Activated naive CD4-positive, alpha-beta T cell treated with anti-CD3 and anti-CD28 coated beads for 36 hours (primary cell): ENCODE measurements at regions of chr3 and their contacts with region 1.

Region 1: DNA sequence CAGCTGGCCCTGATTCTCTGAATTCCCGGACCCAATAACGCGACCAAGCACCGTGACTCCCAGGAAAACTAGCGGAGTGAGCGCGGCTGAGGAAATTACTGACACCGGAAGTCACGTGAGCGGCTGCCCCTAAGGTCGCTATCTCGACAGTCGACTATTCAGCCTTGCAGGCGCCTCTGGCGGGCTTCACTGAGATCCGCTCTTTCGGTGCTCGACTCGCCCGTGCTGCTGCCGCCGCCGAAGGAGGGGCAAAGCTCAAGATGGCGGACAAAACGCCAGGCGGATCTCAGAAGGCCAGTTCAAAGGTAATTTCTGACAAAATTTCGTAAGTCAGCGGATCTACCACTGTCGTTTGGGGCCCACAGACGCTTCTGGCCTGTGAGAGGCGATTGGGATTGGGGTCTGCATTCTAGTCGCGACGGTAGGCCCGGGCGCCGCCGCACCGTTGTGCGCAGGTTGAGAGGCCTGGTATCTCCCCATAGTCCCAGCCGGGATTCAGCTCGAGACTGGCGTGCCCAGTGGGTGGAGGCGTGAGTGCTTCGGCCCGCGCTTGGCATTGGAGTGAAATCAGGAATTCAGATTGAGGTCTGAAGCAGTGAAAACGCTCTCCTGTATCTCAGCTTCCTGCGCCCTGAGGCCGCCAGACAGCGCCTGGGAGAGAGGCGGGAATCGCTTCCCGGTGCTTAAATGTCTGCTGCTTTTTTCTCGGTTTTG is at the start of gene U2SURP:
- DNase-seq: peak; percentile 95
- H3K4me3 Mint-ChIP-seq: peak within 1 kb of the TSS; percentile 96
- H3K27ac Mint-ChIP-seq: peak within 1 kb of the TSS; percentile 96
- H3K4me1 Mint-ChIP-seq: peaks cover 31% of the 10 kb centered on the region
- H3K27me3 Mint-ChIP-seq: no peaks in the 10 kb centered on the region
- total RNA-seq, gene U2SURP: 173 to 180 TPM

Region 2: DNA sequence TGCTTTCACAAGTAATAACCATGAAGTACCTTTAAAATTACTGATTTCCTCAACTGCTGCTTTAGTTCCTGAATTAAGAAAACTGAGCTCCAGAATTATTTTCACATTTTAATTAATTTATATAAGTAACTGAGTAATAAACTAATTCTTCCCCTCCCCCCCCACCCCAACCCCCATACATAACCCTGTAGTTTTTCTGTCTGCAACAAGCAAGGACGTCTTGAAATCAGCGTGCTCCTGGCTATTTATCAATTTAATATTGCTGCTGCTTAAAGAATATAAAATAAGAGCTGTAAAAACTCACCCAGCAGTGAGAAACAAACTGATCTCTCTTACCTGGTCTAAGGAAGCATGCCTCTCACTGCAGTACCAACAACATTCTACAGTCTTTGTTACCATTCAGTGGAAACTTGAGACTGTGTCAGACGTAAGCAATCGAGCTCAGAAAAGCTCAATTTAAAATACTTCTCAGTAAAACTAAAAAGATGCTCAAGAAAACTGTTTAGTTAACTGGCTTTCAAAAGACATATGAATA is 973.2 kb before region 1 on chr3:
- CTCF ChIA-PET with region 1: no interaction called
- intact Hi-C with region 1: loop called (anchors 1 kb)
- DNase-seq: peak; percentile 62
- H3K4me3 Mint-ChIP-seq: peak overlapping the region; percentile 80
- H3K27ac Mint-ChIP-seq: peak overlapping the region; percentile 73
- H3K4me1 Mint-ChIP-seq: peaks cover 24% of the 10 kb centered on the region
- H3K27me3 Mint-ChIP-seq: no peaks in the 10 kb centered on the region

Region 3: GRCh38 chr3:142498397-142499180 is 502.9 kb before region 1 on chr3:
- CTCF ChIA-PET with region 1: no interaction called
- intact Hi-C with region 1: loop called (anchors 5 kb)
- DNase-seq: no peak
- H3K4me3 Mint-ChIP-seq: peak overlapping the region; percentile 15
- H3K27ac Mint-ChIP-seq: peak overlapping the region; percentile 80
- H3K4me1 Mint-ChIP-seq: peaks cover 35% of the 10 kb centered on the region
- H3K27me3 Mint-ChIP-seq: no peaks in the 10 kb centered on the region

Region 4: GRCh38 chr3:142595951-142596725 is 405.4 kb before region 1 on chr3 and contains the start of gene PLS1:
- CTCF ChIA-PET with region 1: no interaction called
- intact Hi-C with region 1: loop called (anchors 1 kb)
- DNase-seq: peak; percentile 83
- H3K4me3 Mint-ChIP-seq: peak within 1 kb of the TSS; percentile 94
- H3K27ac Mint-ChIP-seq: peak within 1 kb of the TSS; percentile 66
- H3K4me1 Mint-ChIP-seq: peaks cover 14% of the 10 kb centered on the region
- H3K27me3 Mint-ChIP-seq: no peaks in the 10 kb centered on the region
- total RNA-seq, gene PLS1: 5.3 to 5.4 TPM

Region 5: GRCh38 chr3:142817897-142818296 is 183.6 kb before region 1 on chr3:
- CTCF ChIA-PET with region 1: no interaction called
- intact Hi-C with region 1: no loop called
- DNase-seq: no peak
- H3K4me3 Mint-ChIP-seq: no peak overlapping the region
- H3K27ac Mint-ChIP-seq: no peak overlapping the region
- H3K4me1 Mint-ChIP-seq: no peaks in the 10 kb centered on the region
- H3K27me3 Mint-ChIP-seq: no peaks in the 10 kb centered on the region

Region 6: GRCh38 chr3:143016321-143016972 is 14.9 kb after region 1 on chr3:
- CTCF ChIA-PET with region 1: interaction called, 6 read pairs
- intact Hi-C with region 1: loop called (anchors 1 kb)
- DNase-seq: no peak
- H3K4me3 Mint-ChIP-seq: no peak overlapping the region
- H3K27ac Mint-ChIP-seq: no peak overlapping the region
- H3K4me1 Mint-ChIP-seq: peaks cover 20% of the 10 kb centered on the region
- H3K27me3 Mint-ChIP-seq: no peaks in the 10 kb centered on the region

Region 7: GRCh38 chr3:143081844-143082778 is 80.6 kb after region 1 on chr3:
- CTCF ChIA-PET with region 1: no interaction called
- intact Hi-C with region 1: loop called (anchors 1 kb)
- DNase-seq: peak; percentile 51
- H3K4me3 Mint-ChIP-seq: peak overlapping the region; percentile 41
- H3K27ac Mint-ChIP-seq: peak overlapping the region; percentile 86
- H3K4me1 Mint-ChIP-seq: peaks cover 23% of the 10 kb centered on the region
- H3K27me3 Mint-ChIP-seq: no peaks in the 10 kb centered on the region

Region 8: GRCh38 chr3:143535994-143536784 is 534.7 kb after region 1 on chr3:
- CTCF ChIA-PET with region 1: no interaction called
- intact Hi-C with region 1: no loop called
- DNase-seq: no peak
- H3K4me3 Mint-ChIP-seq: no peak overlapping the region
- H3K27ac Mint-ChIP-seq: no peak overlapping the region
- H3K4me1 Mint-ChIP-seq: peaks cover 21% of the 10 kb centered on the region
- H3K27me3 Mint-ChIP-seq: no peaks in the 10 kb centered on the region

Region 9: DNA sequence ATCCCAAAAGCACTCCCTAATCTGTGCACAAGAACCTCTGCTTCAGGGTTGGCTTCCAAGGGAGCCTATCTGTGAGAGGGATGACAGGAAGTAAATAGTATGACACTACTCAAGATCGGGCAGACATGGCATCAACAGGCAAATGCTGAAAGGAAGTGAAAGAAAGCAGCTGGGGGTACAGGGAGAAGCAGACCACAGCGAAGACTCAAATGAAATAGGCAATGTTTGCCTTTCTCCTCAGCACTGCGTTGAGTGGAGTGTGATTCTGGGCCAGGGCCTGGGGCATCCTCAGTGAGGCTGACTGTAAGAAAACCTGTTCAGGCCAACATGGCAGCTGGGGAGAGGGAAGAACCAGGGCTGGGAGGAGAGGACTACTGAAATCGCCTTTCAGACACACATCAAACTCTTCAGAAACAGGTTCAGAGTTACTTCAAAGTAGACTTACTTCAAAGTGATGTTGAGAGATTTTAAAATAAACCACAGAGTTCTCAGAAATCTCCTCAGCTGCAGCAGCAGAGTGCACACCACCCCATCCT is 750.2 kb after region 1 on chr3:
- CTCF ChIA-PET with region 1: no interaction called
- intact Hi-C with region 1: loop called (anchors 5 kb)
- DNase-seq: peak; percentile 57
- H3K4me3 Mint-ChIP-seq: peak overlapping the region; percentile 56
- H3K27ac Mint-ChIP-seq: peak overlapping the region; percentile 81
- H3K4me1 Mint-ChIP-seq: peaks cover 49% of the 10 kb centered on the region
- H3K27me3 Mint-ChIP-seq: no peaks in the 10 kb centered on the region